ENCODE measurements at regions of chr9 and their contacts with region 1.

Region 1: DNA sequence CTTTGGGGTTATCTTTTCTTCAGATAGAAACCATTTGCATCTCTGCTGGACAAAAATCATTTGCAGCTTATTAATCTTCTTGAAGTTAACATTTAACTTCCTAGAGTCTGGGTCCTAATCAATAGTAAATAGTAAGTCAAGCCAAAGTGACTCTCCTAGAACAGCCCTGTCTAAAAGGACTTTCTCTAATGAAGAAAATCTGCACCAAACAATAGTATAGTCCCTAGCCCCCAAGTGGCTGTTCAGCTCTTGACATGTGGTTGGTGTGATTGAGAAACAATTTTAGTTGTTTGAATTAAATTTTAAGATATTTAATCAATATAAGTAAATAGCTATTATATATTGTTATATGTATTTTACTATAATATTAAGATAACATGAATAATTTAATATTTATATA is 64.6 kb upstream of the SHB start:
- DNase-seq: no peak
- ATAC-seq: no peak
- H3K4me3 Mint-ChIP-seq: no peak overlapping the region
- H3K27ac Mint-ChIP-seq: no peak overlapping the region
- H3K4me1 Mint-ChIP-seq: no peaks in the 10 kb centered on the region
- H3K27me3 Mint-ChIP-seq: peaks cover 10% of the 10 kb centered on the region

Region 2: GRCh38 chr9:38057416-38058195 is 76.0 kb before region 1 on chr9:
- CTCF ChIA-PET with region 1: no interaction called
- POLR2A ChIA-PET with region 1: no interaction called
- intact Hi-C with region 1: no loop called
- DNase-seq: no peak
- ATAC-seq: no peak
- H3K4me3 Mint-ChIP-seq: no peak overlapping the region
- H3K27ac Mint-ChIP-seq: no peak overlapping the region
- H3K4me1 Mint-ChIP-seq: no peaks in the 10 kb centered on the region
- H3K27me3 Mint-ChIP-seq: no peaks in the 10 kb centered on the region

Region 3: DNA sequence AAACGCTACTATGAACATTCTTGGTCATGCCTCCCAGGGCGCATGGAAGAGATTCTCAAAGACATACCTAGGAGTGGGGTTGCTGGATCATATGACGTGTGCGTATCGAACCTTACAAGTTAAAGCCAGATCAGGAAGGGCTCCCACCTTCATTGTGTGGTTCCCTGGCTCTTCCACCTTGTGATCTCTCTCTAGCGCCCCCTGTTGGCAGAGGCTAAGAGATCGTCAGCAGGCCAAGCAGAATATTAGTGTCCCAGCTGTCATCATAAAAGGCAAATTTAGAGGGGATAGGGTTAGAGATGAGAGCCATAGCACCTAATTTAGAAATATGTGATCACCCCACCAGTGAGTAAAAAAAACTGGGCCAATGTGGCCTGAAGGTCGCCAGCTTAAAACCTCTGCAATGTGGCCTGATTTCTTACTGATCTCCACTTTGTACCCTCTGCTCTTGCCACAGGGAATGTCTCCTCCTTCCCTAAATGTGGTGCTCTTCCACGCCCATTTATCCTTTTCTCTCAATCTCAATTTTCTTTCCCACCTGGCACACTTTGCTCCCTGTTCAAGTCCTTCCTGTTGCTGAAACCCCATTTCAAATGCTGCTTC is 27.1 kb after region 1 on chr9:
- CTCF ChIA-PET with region 1: interaction called, 10 read pairs
- POLR2A ChIA-PET with region 1: no interaction called
- intact Hi-C with region 1: no loop called
- DNase-seq: peak; percentile 83
- ATAC-seq: peak; percentile 72
- H3K4me3 Mint-ChIP-seq: no peak overlapping the region
- H3K27ac Mint-ChIP-seq: no peak overlapping the region
- H3K4me1 Mint-ChIP-seq: peaks cover 2% of the 10 kb centered on the region
- H3K27me3 Mint-ChIP-seq: no peaks in the 10 kb centered on the region

Region 4: DNA sequence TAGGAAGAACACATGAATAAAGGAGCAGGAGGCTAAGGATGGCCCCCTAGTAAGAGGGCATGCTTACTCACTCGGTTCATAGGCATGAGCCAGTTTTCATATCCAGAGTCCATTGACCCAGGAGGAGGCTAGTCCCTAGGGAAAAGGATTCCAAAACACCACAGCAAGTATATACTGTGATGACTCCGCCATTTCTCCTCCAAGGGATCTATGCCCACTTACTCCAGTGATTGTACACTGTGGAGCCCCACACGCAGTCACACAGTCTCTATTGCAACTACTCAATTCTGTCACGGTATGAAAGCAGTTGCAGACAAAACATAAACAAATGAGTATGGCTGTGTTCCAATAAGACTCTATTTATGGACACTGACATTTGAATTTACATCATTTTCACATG is 141.2 kb after region 1 on chr9:
- CTCF ChIA-PET with region 1: no interaction called
- POLR2A ChIA-PET with region 1: no interaction called
- intact Hi-C with region 1: no loop called
- DNase-seq: no peak
- ATAC-seq: no peak
- H3K4me3 Mint-ChIP-seq: no peak overlapping the region
- H3K27ac Mint-ChIP-seq: no peak overlapping the region
- H3K4me1 Mint-ChIP-seq: peaks cover 13% of the 10 kb centered on the region
- H3K27me3 Mint-ChIP-seq: no peaks in the 10 kb centered on the region

Measured in activated CD4-positive, alpha-beta T cell treated with anti-CD3 and anti-CD28 coated beads for 36 hours (primary cell).